Panc1 (cell line): ENCODE measurements at regions of chr10 and their contacts with region 1.

Region 1: DNA sequence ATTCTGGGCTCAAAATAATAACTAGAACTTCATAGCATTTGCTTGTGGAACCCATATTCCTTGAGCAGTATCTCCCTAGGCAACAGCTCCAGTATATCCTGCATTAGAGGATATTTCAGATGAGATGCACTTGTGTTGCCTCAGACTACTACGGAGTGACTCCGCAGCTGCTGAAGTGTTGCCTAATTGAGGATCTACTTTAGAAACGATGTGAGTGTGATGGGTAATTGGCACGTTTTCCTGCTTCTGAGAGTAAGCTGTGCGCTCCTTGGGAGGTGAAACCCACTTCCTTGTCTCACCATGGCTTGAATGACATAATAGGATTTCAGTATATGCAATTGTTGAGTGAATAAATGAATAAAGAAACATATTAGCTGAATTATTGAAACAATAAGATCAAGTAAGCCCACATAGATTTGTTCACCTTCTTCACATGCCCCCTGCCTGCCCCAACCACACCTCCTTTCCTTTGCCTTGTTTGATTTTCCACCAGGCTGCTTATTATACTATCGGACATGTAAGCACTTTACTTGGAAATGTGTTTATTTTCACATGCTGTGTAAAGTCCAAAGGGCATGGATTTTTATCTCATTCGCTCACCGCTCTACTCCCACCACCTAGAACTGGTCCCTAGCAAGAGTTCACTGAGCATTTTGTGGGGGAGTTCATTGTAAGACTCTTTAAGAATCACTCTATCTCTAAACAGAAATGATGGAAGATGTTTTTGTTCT is 303.8 kb downstream of the KCNMA1 start:
- DNase-seq: no peak
- ATAC-seq: no peak
- H3K4me3 ChIP-seq: no peak overlapping the region
- H3K27ac ChIP-seq: no peak overlapping the region
- H3K4me1 ChIP-seq: peaks cover 19% of the 10 kb centered on the region
- H3K27me3 ChIP-seq: no peaks in the 10 kb centered on the region
- CTCF ChIP-seq: no peak

Region 2: DNA sequence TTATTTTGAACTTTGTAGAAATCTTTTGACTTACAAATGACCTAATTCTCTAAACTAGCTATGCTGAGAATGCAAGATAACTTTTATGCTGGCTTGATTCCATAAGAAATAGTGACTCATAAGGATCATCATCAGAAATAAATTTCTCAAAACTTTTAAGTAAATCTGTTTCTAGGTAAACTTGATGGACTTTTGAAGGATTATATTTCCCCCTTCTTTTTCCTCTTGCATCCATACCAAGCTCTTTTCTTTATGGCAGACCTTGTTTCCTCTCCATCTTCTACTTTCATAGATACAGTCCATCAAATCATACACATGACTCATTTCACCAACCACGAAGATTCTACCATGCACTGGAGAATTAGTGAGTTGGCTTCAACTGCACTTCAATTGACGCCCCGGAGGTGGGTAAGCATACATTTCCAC is 32.5 kb before region 1 on chr10:
- CTCF ChIA-PET with region 1: interaction called, 7 read pairs
- POLR2A ChIA-PET with region 1: interaction called, 10 read pairs
- in situ Hi-C with region 1: no loop called
- intact Hi-C with region 1: no loop called
- DNase-seq: no peak
- ATAC-seq: no peak
- H3K4me3 ChIP-seq: no peak overlapping the region
- H3K27ac ChIP-seq: no peak overlapping the region
- H3K4me1 ChIP-seq: peaks cover 18% of the 10 kb centered on the region
- H3K27me3 ChIP-seq: no peaks in the 10 kb centered on the region
- CTCF ChIP-seq: no peak

Region 3: GRCh38 chr10:77319557-77319956 is 14.2 kb before region 1 on chr10:
- CTCF ChIA-PET with region 1: no interaction called
- POLR2A ChIA-PET with region 1: no interaction called
- in situ Hi-C with region 1: no loop called
- intact Hi-C with region 1: no loop called
- DNase-seq: no peak
- ATAC-seq: no peak
- H3K4me3 ChIP-seq: no peak overlapping the region
- H3K27ac ChIP-seq: peak overlapping the region; percentile 3; the same call in 1 of the 2 replicates
- H3K4me1 ChIP-seq: peaks cover 9% of the 10 kb centered on the region
- H3K27me3 ChIP-seq: no peaks in the 10 kb centered on the region
- CTCF ChIP-seq: no peak